Activated naive CD4-positive, alpha-beta T cell treated with anti-CD3 and anti-CD28 coated beads for 36 hours (primary cell): ENCODE measurements at regions of chr9 and their contacts with region 1.

Region 1: DNA sequence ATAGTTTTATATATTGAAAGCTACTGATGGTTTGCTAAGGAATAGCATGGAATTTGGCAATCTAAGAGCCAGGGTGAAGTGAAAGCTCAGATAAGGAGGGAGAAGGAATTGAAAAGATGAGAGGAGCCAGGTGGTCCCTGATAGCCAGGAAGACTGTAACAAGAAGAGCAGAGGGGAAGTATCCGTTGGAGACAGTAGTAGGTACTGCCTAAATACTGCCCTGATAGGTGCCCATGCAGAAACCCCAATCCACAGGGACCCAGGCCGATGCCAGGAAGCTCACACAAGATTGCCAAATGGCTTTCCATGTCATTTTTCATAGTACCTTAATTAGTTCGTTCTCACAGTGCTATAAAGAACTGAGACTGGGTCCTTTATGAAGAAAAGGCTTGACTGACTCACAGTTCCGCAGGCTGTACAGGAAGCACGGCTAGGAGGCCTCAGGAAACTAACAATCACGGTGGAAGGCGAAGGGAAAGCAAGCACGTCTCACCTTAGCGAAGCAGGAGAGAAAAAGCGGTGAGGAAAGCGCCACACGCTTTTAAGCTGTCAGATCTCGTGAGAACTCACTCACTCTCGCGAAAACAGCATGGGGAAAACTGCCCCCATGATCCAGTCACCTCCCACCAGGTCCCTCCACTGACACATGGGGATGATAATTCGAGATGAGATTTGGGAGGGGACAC is 13.0 kb downstream of the ACTL7B start:
- DNase-seq: peak; percentile 69
- H3K4me3 Mint-ChIP-seq: peak overlapping the region; percentile 64
- H3K27ac Mint-ChIP-seq: peak overlapping the region; percentile 50
- H3K4me1 Mint-ChIP-seq: peaks cover 21% of the 10 kb centered on the region
- H3K27me3 Mint-ChIP-seq: no peaks in the 10 kb centered on the region

Region 2: DNA sequence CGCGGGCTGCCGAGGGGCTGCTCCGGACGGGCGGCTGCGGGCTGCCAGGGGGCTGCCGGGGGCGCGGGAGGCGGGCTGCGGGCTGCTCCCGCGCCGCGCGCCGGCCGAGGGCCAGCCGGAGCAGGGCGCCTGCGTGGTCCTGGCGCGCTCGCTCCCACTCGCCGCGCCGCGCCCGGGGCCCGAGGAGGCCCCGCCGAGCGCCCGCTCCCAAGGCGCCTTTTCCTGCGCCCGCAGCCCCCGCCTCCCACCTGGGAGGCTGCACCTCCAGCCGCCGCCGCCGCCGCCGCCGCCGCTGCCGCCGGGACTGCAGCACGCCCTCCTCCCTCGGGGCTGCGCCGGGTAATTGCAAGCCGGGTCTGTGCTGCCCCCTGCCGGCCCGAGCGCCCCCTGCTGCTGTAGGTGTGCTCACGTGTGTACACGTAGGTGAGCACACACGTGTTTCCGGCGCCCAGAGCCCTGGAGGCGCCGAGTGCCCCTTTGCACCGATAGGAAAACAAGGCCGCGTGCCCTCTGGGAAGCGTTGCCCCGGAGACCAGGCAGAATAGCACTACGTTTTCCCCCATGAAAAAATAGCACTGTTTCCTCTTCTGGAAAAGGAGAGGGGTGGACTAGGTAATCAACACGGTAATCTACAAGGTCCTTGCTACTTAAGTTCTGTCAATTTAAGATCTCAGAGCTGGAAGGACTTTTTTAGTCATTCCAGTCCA is 478.1 kb after region 1 on chr9 and contains the start of gene EPB41L4B:
- CTCF ChIA-PET with region 1: no interaction called
- intact Hi-C with region 1: loop called (anchors 5 kb)
- DNase-seq: peak; percentile 95
- H3K4me3 Mint-ChIP-seq: peak within 1 kb of the TSS; percentile 69
- H3K27ac Mint-ChIP-seq: no peak within 1 kb of the TSS
- H3K4me1 Mint-ChIP-seq: peaks cover 10% of the 10 kb centered on the region
- H3K27me3 Mint-ChIP-seq: peaks cover 50% of the 10 kb centered on the region
- total RNA-seq, gene EPB41L4B: 0.24 to 0.25 TPM